ENCODE measurements at regions of chr4 and their contacts with region 1.

Region 1: DNA sequence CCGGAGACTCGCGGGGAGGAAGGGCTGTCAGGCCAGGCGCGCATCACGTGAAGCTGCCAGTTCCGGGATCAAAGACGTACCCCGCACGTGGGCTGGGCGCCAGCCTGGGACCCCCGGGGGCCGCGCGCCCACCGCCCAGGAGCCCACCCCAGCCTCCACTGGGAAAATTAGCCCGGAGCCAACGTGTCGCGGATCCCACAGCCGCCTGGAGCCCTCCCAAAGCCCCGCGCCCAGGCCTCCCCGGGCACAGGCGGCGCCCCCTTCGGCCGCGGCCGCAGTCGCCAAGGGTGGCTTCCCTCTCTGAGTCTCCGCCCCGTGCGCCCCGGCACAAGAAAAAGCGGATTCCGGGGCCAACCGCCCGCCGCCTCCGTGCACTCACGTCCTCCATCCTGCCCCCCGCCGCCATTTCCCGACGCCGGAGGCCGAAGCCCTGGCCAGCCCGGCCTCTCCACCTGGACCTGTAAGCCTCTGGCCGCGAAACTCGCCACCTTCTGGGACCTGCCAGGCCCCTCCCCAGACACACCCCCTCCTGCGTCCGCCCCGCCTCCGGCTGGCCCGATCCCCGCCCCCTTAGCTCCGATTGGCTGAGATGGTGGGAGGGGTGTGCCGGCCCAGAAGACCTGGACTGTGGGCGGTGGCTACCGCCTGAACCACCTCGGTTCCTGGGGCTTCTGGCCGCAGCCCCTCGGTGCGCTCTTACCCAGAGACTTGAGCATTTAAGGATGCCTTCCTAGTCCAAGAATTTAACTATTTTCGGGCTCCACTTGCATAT is at the start of gene TMEM192:
- H3K4me3 Mint-ChIP-seq: peak within 1 kb of the TSS; percentile 99
- H3K27ac Mint-ChIP-seq: peak within 1 kb of the TSS; percentile 95
- H3K4me1 Mint-ChIP-seq: peaks cover 8% of the 10 kb centered on the region
- H3K27me3 Mint-ChIP-seq: peaks cover 13% of the 10 kb centered on the region

Region 2: DNA sequence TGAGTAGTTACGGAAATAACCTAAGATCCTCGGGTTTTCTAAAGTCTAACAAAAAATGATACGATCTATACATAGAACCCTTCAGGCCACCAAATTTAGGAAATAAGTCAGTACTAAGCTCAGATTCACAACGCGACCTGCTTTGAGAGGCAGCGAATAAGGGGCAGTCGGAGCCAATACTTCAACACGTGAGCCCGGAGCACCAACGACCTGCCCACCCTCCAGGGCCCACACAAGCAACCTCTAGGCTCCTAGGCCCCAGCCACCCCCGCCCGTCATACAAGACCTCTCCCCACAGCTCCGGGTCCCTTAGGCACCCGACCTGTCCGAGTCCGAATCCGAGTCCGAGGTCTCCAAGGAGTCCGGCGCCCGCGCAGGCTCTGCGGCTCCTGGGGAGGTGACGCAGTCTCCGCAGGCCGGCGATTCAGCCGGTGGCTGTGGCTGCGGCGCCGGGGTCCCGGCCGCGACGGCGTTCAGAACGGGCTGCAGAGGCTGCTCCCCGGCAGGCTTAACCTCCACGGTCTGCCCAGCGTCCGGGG is 1946.4 kb before region 1 on chr4:
- intact Hi-C with region 1: loop called (anchors 5 kb)
- H3K4me3 Mint-ChIP-seq: peak overlapping the region; percentile 90
- H3K27ac Mint-ChIP-seq: peak overlapping the region; percentile 91
- H3K4me1 Mint-ChIP-seq: peaks cover 29% of the 10 kb centered on the region
- H3K27me3 Mint-ChIP-seq: peaks cover 6% of the 10 kb centered on the region

Region 3: GRCh38 chr4:165152527-165152926 is 40.0 kb after region 1 on chr4:
- intact Hi-C with region 1: no loop called
- H3K4me3 Mint-ChIP-seq: no peak overlapping the region
- H3K27ac Mint-ChIP-seq: no peak overlapping the region
- H3K4me1 Mint-ChIP-seq: no peaks in the 10 kb centered on the region
- H3K27me3 Mint-ChIP-seq: no peaks in the 10 kb centered on the region

Region 4: GRCh38 chr4:165207431-165208220 is 95.1 kb after region 1 on chr4 and contains the start of gene KLHL2:
- intact Hi-C with region 1: loop called (anchors 1 kb)
- H3K4me3 Mint-ChIP-seq: peak within 1 kb of the TSS; percentile 79
- H3K27ac Mint-ChIP-seq: peak within 1 kb of the TSS; percentile 69
- H3K4me1 Mint-ChIP-seq: peaks cover 61% of the 10 kb centered on the region
- H3K27me3 Mint-ChIP-seq: no peaks in the 10 kb centered on the region

Region 5: DNA sequence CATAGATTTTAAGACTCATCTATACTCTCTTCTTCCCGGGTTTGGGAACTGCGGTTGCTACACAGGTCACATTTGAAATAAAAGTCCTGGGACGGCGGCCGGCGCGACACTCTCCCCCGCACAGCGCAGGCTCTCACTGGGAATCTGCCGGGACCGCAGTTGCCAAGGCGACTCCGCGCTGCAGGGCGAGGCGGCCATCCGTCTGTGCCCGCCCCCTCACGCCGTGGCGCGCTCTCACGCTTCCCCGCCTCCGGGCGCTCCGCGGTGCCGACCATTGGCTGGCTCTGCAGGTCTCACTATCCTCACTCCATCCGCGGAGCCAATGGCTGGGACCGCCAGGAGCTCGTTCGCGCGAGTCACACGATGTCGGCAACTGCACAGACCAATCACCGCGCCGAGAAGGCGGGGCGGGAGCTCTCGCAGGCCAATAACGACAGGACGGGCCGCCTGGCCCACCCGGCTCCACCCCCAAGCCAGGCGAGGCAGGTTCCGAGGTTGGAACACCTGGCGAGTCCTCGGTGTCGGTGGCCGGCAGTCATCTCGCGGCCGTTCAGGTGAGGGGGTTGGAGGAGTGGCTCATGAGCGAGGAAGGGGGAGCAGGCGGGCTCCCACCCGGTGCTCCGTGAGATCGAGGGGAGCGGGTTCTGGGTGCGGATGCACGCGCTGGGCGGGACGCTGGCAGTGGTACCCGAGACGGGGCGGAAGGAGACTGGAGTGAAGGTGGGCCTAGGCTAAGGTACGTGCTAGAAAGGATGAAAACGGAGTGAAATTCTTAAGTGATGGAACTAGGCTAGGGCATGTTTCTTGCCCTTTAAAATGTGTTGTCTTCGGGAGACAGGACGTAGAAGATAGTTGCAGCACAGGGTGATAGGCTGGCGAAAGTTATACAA is 214.9 kb after region 1 on chr4 and contains the start of gene MSMO1:
- intact Hi-C with region 1: loop called (anchors 1 kb)
- H3K4me3 Mint-ChIP-seq: no peak within 1 kb of the TSS
- H3K27ac Mint-ChIP-seq: no peak within 1 kb of the TSS
- H3K4me1 Mint-ChIP-seq: peaks cover 44% of the 10 kb centered on the region
- H3K27me3 Mint-ChIP-seq: no peaks in the 10 kb centered on the region